SK-N-SH (cell line): ENCODE measurements at regions of chr1 and their contacts with region 1.

Region 1: DNA sequence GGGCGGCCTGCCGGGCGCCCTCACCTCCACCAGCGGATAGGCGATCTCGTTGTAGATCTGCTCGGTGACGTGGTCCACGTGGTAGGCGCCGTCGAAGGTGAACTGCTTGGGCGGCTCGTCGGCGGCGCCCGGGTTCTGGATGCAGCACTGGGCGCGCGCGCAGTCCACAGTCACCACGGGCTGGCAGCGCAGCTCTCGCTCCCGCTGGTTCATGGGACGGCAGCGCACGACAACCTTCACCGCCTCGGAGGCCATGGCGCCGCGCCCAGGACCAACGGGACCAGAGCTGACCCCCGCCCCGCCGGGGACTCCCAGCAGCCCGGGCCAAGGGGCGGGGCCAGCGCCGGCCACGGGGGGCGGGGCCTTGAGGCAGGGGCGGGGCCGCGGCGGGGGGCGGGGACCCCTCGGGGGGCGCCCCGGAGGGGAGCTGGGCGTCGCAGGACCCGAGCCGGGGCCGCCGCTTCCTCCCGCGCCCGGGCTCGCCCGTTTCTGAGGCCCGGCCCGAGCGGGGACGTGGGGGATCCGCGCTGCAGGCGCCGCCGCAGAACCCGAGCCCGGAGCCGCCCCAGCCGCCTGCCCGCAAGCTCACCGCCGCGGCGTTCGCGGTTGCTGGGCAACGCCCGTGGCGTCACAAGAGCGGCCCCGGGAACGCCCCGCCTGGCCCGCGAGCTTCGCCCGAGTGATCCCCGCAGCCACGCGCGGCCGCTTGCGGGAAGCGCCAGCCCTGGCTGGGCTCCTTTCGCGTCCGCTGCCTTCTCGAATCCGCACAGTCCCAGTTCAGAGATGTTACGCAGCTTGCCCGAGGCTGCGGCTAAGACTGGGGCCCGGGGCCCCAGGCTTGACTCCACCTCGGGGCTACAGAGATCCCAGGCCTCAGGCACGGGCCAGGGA is at the start of gene KIF17:
- DNase-seq: peak; percentile 93
- H3K4me3 ChIP-seq: peak within 1 kb of the TSS; percentile 51 to 59
- H3K27ac ChIP-seq: no peak within 1 kb of the TSS
- H3K4me1 ChIP-seq: peaks cover 0 to 2% of the 10 kb centered on the region in 2 experiments; a peak in 1 of 4 replicates
- H3K27me3 ChIP-seq: no peaks in the 10 kb centered on the region
- CTCF ChIP-seq: no peak
- EP300 ChIP-seq: no peak
- RAD21 ChIP-seq: no peak
- polyA plus RNA-seq, gene KIF17: 4.1 and 4.3 TPM in 2 replicates

Region 2: DNA sequence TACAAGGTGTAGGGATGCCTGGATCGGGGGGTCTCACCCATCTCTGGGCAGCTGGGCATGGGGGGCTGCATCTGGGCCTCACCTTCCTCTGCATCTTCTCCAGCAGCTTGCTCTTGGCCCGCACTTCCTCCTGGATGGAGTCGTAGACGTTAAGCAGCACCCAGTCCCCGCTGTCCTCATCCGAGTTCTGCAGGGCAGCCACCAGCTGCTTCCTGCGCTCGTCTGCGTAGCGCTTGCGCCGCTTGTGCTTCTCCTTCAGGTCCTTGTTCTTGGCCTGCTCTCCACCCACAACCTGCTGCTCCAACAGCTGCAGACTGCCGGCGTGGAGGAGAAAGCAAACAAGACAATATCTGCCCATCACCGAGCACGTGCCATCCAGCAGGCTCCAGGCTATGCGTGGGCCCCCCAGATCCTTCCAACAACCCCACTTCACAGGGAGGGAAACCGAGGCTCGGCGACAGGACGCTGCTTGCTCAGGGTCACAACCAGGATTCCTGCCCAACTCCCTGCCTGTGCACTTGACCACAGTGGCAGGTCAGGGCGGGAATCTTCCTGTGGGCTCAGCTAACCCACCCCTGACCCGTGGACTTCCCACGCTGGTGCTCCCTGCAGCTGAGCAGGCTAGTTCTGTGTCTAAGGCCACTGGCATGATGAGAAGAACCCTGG is 35.0 kb before region 1 on chr1:
- CTCF ChIA-PET with region 1: no interaction called
- POLR2A ChIA-PET with region 1: no interaction called
- DNase-seq: no peak
- H3K4me3 ChIP-seq: no peak overlapping the region
- H3K27ac ChIP-seq: no peak overlapping the region
- H3K4me1 ChIP-seq: no peaks in the 10 kb centered on the region; a peak in 1 of 4 replicates
- H3K27me3 ChIP-seq: no peaks in the 10 kb centered on the region
- CTCF ChIP-seq: no peak
- EP300 ChIP-seq: no peak
- RAD21 ChIP-seq: no peak

Region 3: GRCh38 chr1:20732588-20733360 is 15.1 kb after region 1 on chr1 and contains the start of gene SH2D5:
- CTCF ChIA-PET with region 1: interaction called, 11 read pairs
- POLR2A ChIA-PET with region 1: interaction called, 3 read pairs
- DNase-seq: peak; percentile 73
- H3K4me3 ChIP-seq: peak within 1 kb of the TSS; percentile 57 to 68
- H3K27ac ChIP-seq: peak within 1 kb of the TSS; percentile 16 to 90; a peak in 3 of 4 replicates
- H3K4me1 ChIP-seq: peaks cover 7 to 17% of the 10 kb centered on the region in 2 experiments; a peak in 2 of 4 replicates
- H3K27me3 ChIP-seq: no peaks in the 10 kb centered on the region
- CTCF ChIP-seq: peak; percentile 47
- EP300 ChIP-seq: peak in 1 of 2 experiments; percentile 56; a peak in 1 of 4 replicates
- RAD21 ChIP-seq: peak; percentile 52
- polyA plus RNA-seq, gene SH2D5: 6.1 and 6.5 TPM in 2 replicates